ENCODE measurements at regions of chr12 and their contacts with region 1.

Region 1: GRCh38 chr12:127381048-127381668 is 885.8 kb upstream of the TMEM132C start:
- DNase-seq: peak; percentile 19
- H3K4me3 Mint-ChIP-seq: no peak overlapping the region
- H3K27ac Mint-ChIP-seq: no peak overlapping the region
- H3K4me1 Mint-ChIP-seq: no peaks in the 10 kb centered on the region
- H3K27me3 Mint-ChIP-seq: peaks cover 4% of the 10 kb centered on the region

Region 2: DNA sequence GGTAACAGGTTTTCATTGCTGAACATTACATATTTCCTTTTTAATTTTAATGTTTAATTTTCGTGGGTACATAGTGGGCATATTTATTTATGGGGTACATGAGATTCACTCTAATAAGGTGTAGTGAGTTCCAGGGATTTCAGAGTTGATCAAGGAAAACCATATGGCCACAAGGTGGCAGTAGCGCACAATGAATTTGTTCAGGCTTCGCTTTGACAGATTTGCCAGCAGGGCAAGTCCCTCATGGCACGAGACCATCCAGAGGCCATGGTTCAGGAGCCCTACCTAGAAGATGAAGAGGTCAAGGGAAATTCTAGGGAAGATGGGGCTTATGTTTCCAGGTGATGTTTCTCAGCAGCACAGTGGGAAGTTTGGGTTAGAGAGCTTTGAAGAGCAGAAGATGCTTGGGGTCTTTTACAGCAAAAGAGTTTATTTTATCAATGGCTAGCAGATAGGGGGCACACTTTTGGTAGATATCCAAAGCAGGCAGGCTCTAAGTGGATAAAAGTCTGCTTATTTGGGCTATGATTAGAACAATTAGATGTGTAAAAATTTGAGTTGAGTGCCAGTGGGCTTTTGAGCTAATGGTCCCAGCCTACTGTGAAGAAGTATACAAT is 1311.5 kb before region 1 on chr12:
- intact Hi-C with region 1: loop called (anchors 2 kb)
- DNase-seq: peak; percentile 11
- H3K4me3 Mint-ChIP-seq: no peak overlapping the region
- H3K27ac Mint-ChIP-seq: no peak overlapping the region
- H3K4me1 Mint-ChIP-seq: no peaks in the 10 kb centered on the region
- H3K27me3 Mint-ChIP-seq: no peaks in the 10 kb centered on the region

Region 3: DNA sequence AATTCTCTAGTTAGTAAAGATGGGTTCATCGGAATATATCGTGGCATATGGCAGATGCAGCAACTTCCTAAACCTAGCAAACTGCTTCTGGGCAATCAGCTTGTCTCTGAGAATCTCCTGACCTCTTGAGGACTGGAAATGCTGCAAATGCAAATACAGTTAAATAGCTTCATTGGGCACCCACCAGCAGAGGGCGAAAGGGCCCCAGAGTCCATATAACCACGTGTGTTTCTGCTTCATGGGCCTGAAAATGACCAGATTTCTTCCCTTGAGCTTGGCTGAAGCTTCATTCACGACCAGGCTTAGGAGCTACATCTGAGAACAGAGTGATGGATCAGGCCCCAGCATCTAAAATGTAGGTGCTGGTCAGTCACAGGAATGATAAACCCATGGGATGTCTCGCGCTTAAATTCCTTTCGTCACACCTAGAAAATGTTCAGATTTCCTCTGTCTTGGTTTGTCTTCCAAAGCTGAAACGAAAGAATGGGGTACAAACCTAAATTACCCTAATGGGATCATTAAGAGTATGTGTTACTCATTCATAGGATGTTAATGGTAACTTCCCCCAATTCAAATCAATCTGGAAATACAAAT is 596.7 kb before region 1 on chr12:
- intact Hi-C with region 1: loop called (anchors 2 kb)
- DNase-seq: no peak
- H3K4me3 Mint-ChIP-seq: no peak overlapping the region
- H3K27ac Mint-ChIP-seq: no peak overlapping the region
- H3K4me1 Mint-ChIP-seq: no peaks in the 10 kb centered on the region
- H3K27me3 Mint-ChIP-seq: peaks cover 4% of the 10 kb centered on the region

Region 4: DNA sequence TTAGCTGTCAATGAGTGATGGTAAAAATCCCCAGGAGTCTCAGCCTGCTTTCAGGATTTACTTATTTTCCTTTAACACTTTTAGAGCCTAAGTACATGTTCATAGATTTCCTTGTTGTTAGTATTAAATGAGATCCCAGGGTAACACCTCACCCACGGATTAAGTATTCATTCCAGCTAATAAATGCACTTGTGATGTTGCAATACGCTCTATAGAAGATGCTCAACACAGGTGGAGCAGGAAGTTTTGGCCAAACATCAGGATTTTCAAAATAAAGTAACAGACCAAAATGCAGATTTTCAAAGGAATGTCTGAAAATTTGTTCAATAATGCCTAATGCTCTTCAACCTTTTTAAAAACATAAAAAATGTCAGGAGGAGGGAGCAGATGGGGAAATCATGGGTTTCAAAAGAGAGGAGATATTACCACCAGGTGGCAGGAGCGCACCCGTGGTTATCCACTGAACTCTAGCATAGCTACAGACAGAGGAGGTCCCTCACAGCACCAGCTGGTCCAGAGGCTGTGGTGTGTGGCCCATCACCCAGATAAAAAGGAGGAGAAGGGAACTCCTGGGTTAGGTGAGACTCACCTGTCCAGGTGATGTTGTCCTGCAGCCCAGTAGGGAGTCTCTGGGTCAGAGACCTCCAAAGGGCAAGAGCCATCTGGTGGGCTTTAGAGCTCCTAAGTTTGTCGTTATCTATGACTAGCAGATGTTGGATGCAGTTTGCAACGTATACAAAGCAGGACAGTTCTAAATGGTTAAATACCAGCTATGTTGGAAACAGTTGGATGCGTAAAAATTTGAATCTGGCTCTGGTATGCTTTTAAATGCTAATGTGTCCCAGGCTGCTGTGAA is 272.6 kb before region 1 on chr12:
- intact Hi-C with region 1: loop called (anchors 1 kb)
- DNase-seq: peak; percentile 16
- H3K4me3 Mint-ChIP-seq: no peak overlapping the region
- H3K27ac Mint-ChIP-seq: no peak overlapping the region
- H3K4me1 Mint-ChIP-seq: peaks cover 6% of the 10 kb centered on the region
- H3K27me3 Mint-ChIP-seq: peaks cover 6% of the 10 kb centered on the region

Region 5: DNA sequence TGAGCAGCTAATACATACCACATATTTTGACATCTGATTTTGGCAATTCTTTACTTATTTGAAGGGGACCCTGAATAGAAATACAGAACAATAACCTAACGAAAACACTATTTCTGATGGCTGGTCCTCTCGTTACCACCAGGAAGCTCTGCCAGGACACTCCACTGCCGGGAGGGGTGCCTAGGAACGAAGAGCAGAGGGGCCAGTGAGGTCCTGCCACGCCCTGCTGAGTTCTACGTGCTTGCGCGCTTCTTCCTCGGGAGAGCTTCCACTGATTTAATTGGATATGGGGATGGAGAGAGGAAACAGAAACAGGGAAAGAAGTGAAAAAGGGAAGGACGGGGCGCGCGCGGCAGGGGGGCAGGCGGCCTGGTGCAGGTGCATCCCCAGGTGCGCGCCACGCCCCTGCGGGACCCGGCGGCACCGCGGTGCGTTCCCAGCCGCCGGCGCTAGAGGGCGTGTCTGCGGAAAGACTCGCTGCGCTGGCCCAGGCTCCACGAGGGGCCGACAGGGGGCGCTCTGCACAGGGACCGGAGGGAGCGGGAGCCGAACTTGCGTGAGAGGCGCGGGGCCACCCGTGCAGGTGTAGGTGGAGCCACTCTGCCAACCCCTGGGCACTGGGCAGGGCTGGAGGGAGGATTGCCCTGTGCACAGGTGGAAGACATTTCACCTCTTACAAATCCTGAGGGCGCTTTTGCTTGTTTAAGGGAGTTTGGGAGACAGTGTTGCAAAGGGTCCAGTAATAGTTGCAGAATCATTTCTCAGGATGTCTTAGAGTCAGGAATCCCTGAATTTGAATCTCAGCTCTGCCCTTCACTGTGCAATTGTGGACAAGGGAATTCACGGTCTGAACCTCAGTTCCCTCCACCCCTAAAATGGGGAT is 100.5 kb before region 1 on chr12:
- intact Hi-C with region 1: loop called (anchors 2 kb)
- DNase-seq: peak; percentile 58
- H3K4me3 Mint-ChIP-seq: no peak overlapping the region
- H3K27ac Mint-ChIP-seq: no peak overlapping the region
- H3K4me1 Mint-ChIP-seq: peaks cover 7% of the 10 kb centered on the region
- H3K27me3 Mint-ChIP-seq: no peaks in the 10 kb centered on the region

Region 6: DNA sequence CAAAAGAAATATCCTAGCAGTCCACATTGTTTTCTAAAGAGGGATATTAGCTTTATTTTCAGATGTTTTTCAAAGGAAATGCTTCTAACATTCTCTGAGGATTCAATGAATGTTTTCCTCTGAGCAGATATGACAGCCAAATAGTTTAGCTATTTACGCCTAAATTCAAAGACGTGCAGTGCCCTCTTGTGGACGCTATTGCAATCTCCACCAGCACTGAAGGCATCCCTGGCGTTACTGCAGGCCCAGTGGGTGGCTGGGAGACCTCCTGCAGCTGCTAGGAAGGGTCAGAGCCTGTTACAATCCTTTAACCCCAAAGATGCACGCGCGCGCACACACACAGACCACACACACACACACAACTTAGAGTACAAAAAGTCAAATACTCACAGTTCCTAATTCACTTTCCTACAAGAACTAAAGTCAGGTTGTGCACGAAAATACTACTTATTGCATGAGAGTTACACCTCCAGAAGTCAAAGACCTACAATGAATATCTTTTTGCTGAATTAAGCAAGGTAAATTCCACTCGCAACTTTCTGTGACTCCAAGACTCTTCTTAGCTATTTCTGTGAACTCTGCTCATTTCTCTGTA is 296.5 kb after region 1 on chr12:
- intact Hi-C with region 1: loop called (anchors 2 kb)
- DNase-seq: peak; percentile 21
- H3K4me3 Mint-ChIP-seq: no peak overlapping the region
- H3K27ac Mint-ChIP-seq: no peak overlapping the region
- H3K4me1 Mint-ChIP-seq: no peaks in the 10 kb centered on the region
- H3K27me3 Mint-ChIP-seq: no peaks in the 10 kb centered on the region

Measured in activated T-helper 1 cell treated with anti-CD3 and anti-CD28 coated beads, Interleukin-12 subunit alpha, Interleukin-12 subunit beta, Interleukin-2, Interleukin-4 antibody, amounts not matched to agents 30 ng/mL and 10 ng/mL and 1 ng/mL, durations not matched to agents 14 hours and 24 hours and 36 hours (primary cell).